Common myeloid progenitor, CD34-positive (primary cell): ENCODE measurements at regions of chr2 and their contacts with region 1.

Region 1: GRCh38 chr2:130391058-130391871 is 35.4 kb downstream of the PTPN18 start:
- DNase-seq: peak; percentile 61 to 84 (median 76)
- H3K4me3 ChIP-seq: peak overlapping the region; percentile 43 to 89 (median 72)
- H3K27ac ChIP-seq: no peak overlapping the region
- H3K4me1 ChIP-seq: peaks cover 0 to 18% (median 17%) of the 10 kb centered on the region in 4 experiments
- H3K27me3 ChIP-seq: no peaks in the 10 kb centered on the region

Region 2: GRCh38 chr2:130372055-130372832 is 19.0 kb before region 1 on chr2:
- CTCF ChIA-PET with region 1: interaction called, 18 read pairs
- POLR2A ChIA-PET with region 1: no interaction called
- DNase-seq: peak; percentile 58 to 81 (median 68)
- H3K4me3 ChIP-seq: peak overlapping the region; percentile 63 to 88 (median 75)
- H3K27ac ChIP-seq: peak overlapping the region in 1 of 2 experiments; percentile 65
- H3K4me1 ChIP-seq: peaks cover 0 to 31% (median 25%) of the 10 kb centered on the region in 4 experiments
- H3K27me3 ChIP-seq: no peaks in the 10 kb centered on the region